GM13976 (cell line): ENCODE measurements at regions of chr16 and their contacts with region 1.

Region 1: GRCh38 chr16:66081775-66082366 is 284.6 kb upstream of the CDH5 start:
- DNase-seq: no peak
- CTCF ChIP-seq: no peak

Region 2: GRCh38 chr16:65975049-65976009 is 106.5 kb before region 1 on chr16:
- in situ Hi-C with region 1: loop called (anchors 25 kb)
- DNase-seq: no peak
- CTCF ChIP-seq: no peak

Region 3: DNA sequence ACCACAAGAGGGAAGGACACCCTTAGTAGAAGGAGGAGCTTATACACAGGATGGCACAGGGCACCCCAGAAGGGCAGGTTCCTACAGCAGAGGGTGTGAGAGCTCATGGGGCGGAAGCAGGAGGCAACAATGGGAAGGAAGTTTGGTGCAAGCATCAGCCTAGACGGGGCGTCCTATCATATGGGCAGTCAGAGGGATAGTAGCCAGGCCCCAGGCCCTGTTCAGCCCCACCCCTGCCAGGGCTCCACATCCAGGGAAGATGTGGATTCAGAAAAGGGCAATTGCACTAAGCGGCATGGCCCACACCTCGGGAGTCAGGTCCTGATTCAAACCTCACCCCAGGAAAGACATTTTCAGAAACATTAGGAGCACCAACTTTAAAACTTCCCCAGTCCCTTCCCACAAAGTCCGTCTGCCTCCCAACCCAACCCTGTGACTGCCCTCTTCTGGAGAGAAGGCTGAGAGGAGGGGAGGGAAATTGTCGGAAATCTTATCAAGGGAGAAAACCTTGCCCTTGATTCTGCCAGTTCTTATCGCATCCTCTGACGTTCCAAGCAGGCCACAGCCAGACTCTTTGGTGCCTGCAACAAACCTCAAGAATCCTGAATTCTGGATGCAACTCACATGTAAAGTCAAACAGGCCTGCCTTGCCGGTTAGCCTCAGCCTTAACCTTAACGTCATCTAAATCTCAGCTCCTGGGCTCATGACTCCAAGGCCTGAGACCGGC is 85.9 kb after region 1 on chr16:
- in situ Hi-C with region 1: no loop called
- DNase-seq: no peak
- CTCF ChIP-seq: no peak